Activated CD4-positive, alpha-beta memory T cell treated with anti-CD3 and anti-CD28 coated beads for 36 hours (primary cell): ENCODE measurements at regions of chr16 and their contacts with region 1.

Region 1: GRCh38 chr16:24253192-24253591 is 2.9 kb upstream of the CACNG3 start:
- DNase-seq: peak; percentile 49
- H3K4me3 Mint-ChIP-seq: no peak overlapping the region
- H3K27ac Mint-ChIP-seq: no peak overlapping the region
- H3K4me1 Mint-ChIP-seq: peaks cover 10% of the 10 kb centered on the region
- H3K27me3 Mint-ChIP-seq: peaks cover 52% of the 10 kb centered on the region

Region 2: GRCh38 chr16:23245268-23245667 is 1007.9 kb before region 1 on chr16:
- CTCF ChIA-PET with region 1: no interaction called
- POLR2A ChIA-PET with region 1: no interaction called
- intact Hi-C with region 1: no loop called
- DNase-seq: no peak
- H3K4me3 Mint-ChIP-seq: no peak overlapping the region
- H3K27ac Mint-ChIP-seq: no peak overlapping the region
- H3K4me1 Mint-ChIP-seq: no peaks in the 10 kb centered on the region
- H3K27me3 Mint-ChIP-seq: peaks cover 6% of the 10 kb centered on the region

Region 3: DNA sequence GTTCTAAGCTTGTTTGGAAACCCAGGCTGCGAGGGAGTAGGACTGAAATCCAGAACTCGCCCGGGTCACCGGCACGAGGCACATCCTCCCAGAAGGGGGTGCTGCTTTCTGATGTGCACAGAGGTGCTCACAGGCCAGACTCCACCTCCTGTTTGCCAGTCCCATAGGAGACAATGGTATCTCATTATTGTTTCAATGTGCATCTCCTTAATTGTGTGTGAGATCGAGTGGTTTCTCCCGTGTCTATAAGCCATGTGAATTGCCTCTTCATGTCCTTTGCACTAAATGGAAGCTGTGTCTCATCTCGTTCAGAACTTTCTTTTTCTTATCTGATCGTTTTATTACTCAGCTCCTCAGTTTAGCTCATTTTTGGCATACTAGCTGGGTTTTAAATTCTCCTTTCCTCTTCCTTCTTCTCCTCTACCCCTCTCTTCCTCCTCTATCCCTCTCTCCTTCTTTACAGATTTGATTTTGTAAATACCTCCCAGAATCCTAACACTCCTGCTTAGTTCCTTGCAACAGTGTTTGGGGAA is 449.5 kb before region 1 on chr16:
- CTCF ChIA-PET with region 1: interaction called, 5 read pairs
- POLR2A ChIA-PET with region 1: no interaction called
- intact Hi-C with region 1: loop called (anchors 2 kb)
- DNase-seq: peak; percentile 78
- H3K4me3 Mint-ChIP-seq: peak overlapping the region; percentile 17
- H3K27ac Mint-ChIP-seq: no peak overlapping the region
- H3K4me1 Mint-ChIP-seq: peaks cover 9% of the 10 kb centered on the region
- H3K27me3 Mint-ChIP-seq: no peaks in the 10 kb centered on the region

Region 4: GRCh38 chr16:24062270-24062817 is 190.8 kb before region 1 on chr16:
- CTCF ChIA-PET with region 1: interaction called, 10 read pairs
- POLR2A ChIA-PET with region 1: no interaction called
- intact Hi-C with region 1: no loop called
- DNase-seq: no peak
- H3K4me3 Mint-ChIP-seq: no peak overlapping the region
- H3K27ac Mint-ChIP-seq: no peak overlapping the region
- H3K4me1 Mint-ChIP-seq: no peaks in the 10 kb centered on the region
- H3K27me3 Mint-ChIP-seq: no peaks in the 10 kb centered on the region

Region 5: GRCh38 chr16:24139282-24139681 is 113.9 kb before region 1 on chr16:
- CTCF ChIA-PET with region 1: no interaction called
- POLR2A ChIA-PET with region 1: no interaction called
- intact Hi-C with region 1: loop called (anchors 5 kb)
- DNase-seq: peak; percentile 26
- H3K4me3 Mint-ChIP-seq: no peak overlapping the region
- H3K27ac Mint-ChIP-seq: peak overlapping the region; percentile 3
- H3K4me1 Mint-ChIP-seq: peaks cover 22% of the 10 kb centered on the region
- H3K27me3 Mint-ChIP-seq: no peaks in the 10 kb centered on the region

Region 6: DNA sequence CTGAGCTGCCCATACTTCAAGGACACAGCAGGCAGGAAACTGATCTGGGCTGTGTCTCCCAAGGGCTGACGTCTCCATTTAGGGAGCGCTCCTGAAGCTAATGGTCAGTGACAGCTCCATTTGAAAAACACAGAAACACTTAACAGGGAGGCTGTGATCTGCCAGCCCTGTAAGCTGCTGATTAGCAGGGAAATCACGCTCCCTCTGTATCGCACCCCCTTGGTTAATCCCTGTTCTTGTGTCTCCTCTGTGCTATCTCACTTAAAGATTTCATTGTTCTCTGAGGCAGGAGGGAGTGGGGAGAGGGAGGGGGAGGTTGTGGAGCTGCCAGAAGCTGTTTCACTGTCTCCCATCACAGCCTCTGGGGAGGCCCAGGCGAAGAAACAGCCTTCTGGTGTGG is 44.5 kb before region 1 on chr16:
- CTCF ChIA-PET with region 1: interaction called, 10 read pairs
- POLR2A ChIA-PET with region 1: no interaction called
- intact Hi-C with region 1: no loop called
- DNase-seq: no peak
- H3K4me3 Mint-ChIP-seq: no peak overlapping the region
- H3K27ac Mint-ChIP-seq: no peak overlapping the region
- H3K4me1 Mint-ChIP-seq: no peaks in the 10 kb centered on the region
- H3K27me3 Mint-ChIP-seq: no peaks in the 10 kb centered on the region

Region 7: GRCh38 chr16:24270721-24271120 is 17.5 kb after region 1 on chr16:
- CTCF ChIA-PET with region 1: interaction called, 16 read pairs
- POLR2A ChIA-PET with region 1: interaction called, 3 read pairs
- intact Hi-C with region 1: no loop called
- DNase-seq: no peak
- H3K4me3 Mint-ChIP-seq: no peak overlapping the region
- H3K27ac Mint-ChIP-seq: no peak overlapping the region
- H3K4me1 Mint-ChIP-seq: no peaks in the 10 kb centered on the region
- H3K27me3 Mint-ChIP-seq: peaks cover 41% of the 10 kb centered on the region